IMR-90 (cell line): ENCODE measurements at regions of chr3 and their contacts with region 1.

Region 1: GRCh38 chr3:116247605-116248004 is 197.7 kb downstream of the LSAMP start:
- DNase-seq: no peak
- ATAC-seq: no peak
- H3K4me3 ChIP-seq: no peak overlapping the region
- H3K27ac ChIP-seq: no peak overlapping the region
- H3K4me1 ChIP-seq: no peaks in the 10 kb centered on the region; the same call in 1 of the 2 replicates
- H3K27me3 ChIP-seq: no peaks in the 10 kb centered on the region
- CTCF ChIP-seq: no peak
- POLR2A ChIP-seq: no peak
- RAD21 ChIP-seq: no peak

Region 2: DNA sequence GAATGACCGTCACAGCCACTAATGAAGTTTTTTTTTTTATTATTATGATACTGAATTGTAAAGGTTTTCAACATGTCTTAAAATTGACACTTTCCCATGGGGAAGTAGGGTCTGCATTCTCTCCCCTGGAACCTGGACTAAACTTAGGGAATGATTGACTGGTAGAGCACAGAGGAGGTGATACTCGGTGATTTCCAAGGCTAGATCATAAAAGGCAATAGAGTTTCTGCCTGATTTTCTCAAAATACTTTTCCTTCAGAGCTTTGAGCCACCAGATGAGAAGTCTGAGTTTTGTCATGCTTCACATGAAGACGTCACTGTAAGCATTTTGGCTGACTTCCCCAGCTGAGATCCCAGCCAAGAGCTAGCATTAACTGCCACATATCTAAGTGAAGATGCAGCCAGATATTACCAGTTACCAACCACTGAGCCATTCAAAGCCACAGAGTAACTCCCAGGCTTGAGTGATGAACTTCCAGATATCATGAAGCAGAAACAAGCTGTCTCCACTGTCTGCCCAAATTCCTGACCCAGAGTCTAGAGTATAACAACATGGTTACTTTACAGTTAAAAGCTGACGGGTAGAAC is 91.9 kb after region 1 on chr3:
- CTCF ChIA-PET with region 1: no interaction called
- POLR2A ChIA-PET with region 1: no interaction called
- dilution Hi-C with region 1: no loop called
- in situ Hi-C with region 1: no loop called
- intact Hi-C with region 1: loop called (anchors 1 kb)
- DNase-seq: peak; percentile 88
- ATAC-seq: peak; percentile 86
- H3K4me3 ChIP-seq: no peak overlapping the region
- H3K27ac ChIP-seq: no peak overlapping the region
- H3K4me1 ChIP-seq: no peaks in the 10 kb centered on the region
- H3K27me3 ChIP-seq: no peaks in the 10 kb centered on the region
- CTCF ChIP-seq: no peak
- POLR2A ChIP-seq: no peak
- RAD21 ChIP-seq: no peak